ENCODE measurements at regions of chr1 and their contacts with region 1.

Region 1: GRCh38 chr1:89524369-89525168 is at the start of gene LRRC8B:
- DNase-seq: peak; percentile 94
- ATAC-seq: peak; percentile 71
- H3K4me3 Mint-ChIP-seq: no peak within 1 kb of the TSS
- H3K27ac Mint-ChIP-seq: no peak within 1 kb of the TSS
- H3K4me1 Mint-ChIP-seq: peaks cover 24% of the 10 kb centered on the region
- H3K27me3 Mint-ChIP-seq: no peaks in the 10 kb centered on the region
- total RNA-seq, gene LRRC8B: 38.9 to 41.5 TPM

Region 2: DNA sequence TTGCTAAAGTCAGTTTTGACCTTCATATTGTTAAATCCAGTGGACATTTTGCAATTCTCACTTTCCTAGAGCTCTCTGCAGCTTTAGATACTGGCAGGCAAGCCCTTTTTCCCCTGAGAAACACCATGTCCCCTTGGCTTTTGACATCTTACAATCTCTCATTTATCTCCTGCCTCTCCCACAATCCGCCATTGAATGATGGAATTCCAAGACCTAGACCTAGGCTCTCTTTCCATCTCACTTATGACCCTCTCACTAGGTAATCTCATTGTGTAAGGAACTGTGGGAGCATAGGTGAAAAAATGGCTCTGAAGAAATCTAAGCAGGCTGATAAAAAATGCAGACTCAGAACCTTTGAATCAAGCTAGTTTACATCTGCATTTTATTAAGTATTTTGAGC is 534.1 kb before region 1 on chr1:
- CTCF ChIA-PET with region 1: no interaction called
- POLR2A ChIA-PET with region 1: no interaction called
- intact Hi-C with region 1: loop called in 1 of 2 experiments (anchors 1 kb)
- DNase-seq: no peak
- ATAC-seq: no peak
- H3K4me3 Mint-ChIP-seq: peak overlapping the region; percentile 41
- H3K27ac Mint-ChIP-seq: peak overlapping the region; percentile 48
- H3K4me1 Mint-ChIP-seq: peaks cover 50% of the 10 kb centered on the region
- H3K27me3 Mint-ChIP-seq: no peaks in the 10 kb centered on the region

Region 3: GRCh38 chr1:89538361-89538760 is 13.8 kb after region 1 on chr1:
- CTCF ChIA-PET with region 1: interaction called, 14 read pairs
- POLR2A ChIA-PET with region 1: interaction called, 5 read pairs
- intact Hi-C with region 1: loop called in 1 of 2 experiments (anchors 1 kb)
- DNase-seq: peak; percentile 31
- ATAC-seq: peak; percentile 27
- H3K4me3 Mint-ChIP-seq: no peak overlapping the region
- H3K27ac Mint-ChIP-seq: peak overlapping the region; percentile 88
- H3K4me1 Mint-ChIP-seq: peaks cover 90% of the 10 kb centered on the region
- H3K27me3 Mint-ChIP-seq: no peaks in the 10 kb centered on the region

Region 4: DNA sequence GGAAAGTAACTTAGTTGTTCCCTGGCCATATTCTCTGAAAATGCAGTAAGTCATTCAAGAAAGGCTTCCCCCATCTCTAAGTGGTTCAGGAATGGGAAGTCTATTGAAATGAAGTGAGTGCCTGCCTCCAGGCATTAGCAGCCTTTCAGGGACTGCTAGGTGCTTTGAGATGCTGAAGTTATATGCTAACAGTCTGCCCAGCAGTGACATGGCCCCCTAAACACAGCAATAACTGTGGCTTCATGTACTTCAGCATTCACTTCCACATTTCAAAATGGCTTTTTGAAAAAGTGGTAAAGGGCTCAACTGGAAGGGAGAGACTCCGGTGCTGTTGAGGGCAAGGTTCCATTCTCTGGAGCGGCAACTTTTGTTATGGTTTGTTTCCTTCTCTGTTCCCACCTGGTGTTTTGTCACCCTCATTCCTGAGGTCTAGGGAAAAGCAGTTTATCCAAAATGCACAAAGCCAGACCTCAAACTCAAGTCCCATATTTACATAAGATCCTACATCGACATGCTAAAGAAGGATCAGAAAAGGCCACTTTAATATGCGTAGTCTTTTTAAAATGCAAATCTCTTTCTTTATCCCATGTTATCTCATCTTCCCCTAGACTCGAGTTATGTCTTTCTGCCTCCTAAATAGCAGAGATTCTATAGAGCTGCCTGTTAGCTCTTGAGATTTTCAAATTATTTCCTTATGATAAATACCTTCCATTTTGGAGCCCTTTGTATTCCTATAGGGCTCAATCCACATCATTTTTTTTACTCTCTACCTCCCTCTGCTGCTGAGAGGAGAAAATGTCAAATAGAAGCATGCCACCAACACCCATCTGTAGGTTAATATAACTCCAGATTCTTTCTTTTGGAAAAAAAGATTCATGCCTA is 74.1 kb after region 1 on chr1:
- CTCF ChIA-PET with region 1: interaction called, 4 read pairs
- POLR2A ChIA-PET with region 1: interaction called, 10 read pairs
- intact Hi-C with region 1: loop called (anchors 1 to 5 kb)
- DNase-seq: no peak
- ATAC-seq: peak; percentile 14
- H3K4me3 Mint-ChIP-seq: no peak overlapping the region
- H3K27ac Mint-ChIP-seq: peak overlapping the region; percentile 99
- H3K4me1 Mint-ChIP-seq: peaks cover 85% of the 10 kb centered on the region
- H3K27me3 Mint-ChIP-seq: no peaks in the 10 kb centered on the region

Region 5: DNA sequence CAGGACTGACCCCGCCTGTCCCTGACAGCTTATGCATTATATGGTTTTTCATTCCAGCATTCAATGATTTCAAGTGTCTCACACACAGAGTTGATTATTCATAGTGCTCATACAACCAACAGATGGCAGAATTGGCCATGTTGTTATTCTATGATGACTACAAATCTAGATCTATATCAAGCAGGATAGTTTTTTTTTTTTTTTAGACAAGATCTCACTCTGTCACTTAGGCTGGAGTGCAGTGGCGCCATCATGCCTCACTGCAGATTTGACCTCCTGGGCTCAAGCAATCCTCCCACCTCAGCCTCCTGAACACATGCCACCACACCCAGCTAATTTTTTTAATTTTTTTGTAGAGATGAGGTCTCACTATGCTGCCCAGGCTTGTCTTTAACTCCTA is 256.2 kb after region 1 on chr1:
- CTCF ChIA-PET with region 1: interaction called, 3 read pairs
- POLR2A ChIA-PET with region 1: no interaction called
- intact Hi-C with region 1: loop called in 1 of 2 experiments (anchors 2 kb)
- DNase-seq: peak; percentile 59
- ATAC-seq: peak; percentile 73
- H3K4me3 Mint-ChIP-seq: peak overlapping the region; percentile 48
- H3K27ac Mint-ChIP-seq: peak overlapping the region; percentile 86
- H3K4me1 Mint-ChIP-seq: peaks cover 44% of the 10 kb centered on the region
- H3K27me3 Mint-ChIP-seq: no peaks in the 10 kb centered on the region

Measured in activated CD4-positive, alpha-beta T cell treated with anti-CD3 and anti-CD28 coated beads for 36 hours (primary cell).